ENCODE measurements at regions of chr14 and their contacts with region 1.

Region 1: DNA sequence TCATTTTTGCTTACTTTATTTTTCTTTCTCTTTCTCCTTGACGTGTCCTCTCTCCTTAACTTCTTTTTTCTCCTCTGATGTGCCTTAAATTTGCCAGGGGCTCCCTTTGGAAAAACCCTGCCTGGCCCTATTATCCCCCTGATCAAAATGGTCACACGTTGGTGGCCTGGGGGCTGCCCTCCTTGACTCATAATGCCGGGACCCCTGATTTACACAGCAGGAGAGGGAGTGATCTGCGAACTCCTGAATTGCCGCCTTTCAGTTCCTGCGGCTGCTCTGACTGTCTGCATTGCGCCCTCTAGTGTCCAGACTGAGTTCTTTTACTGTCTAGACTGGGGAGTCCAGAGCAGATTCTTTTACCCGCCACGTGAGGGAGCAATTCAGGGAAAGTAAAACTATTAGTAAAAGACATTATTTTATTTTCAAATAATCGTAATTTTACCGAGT is 44.8 kb upstream of the GZMB start:
- DNase-seq: peak; percentile 76
- H3K4me3 ChIP-seq: peak overlapping the region in 2 of 3 experiments; percentile 26 to 34
- H3K27ac ChIP-seq: peak overlapping the region; percentile 52
- H3K4me1 ChIP-seq: peaks cover 21% of the 10 kb centered on the region
- H3K27me3 ChIP-seq: no peaks in the 10 kb centered on the region
- CTCF ChIP-seq: peak; percentile 97 to 99

Region 2: DNA sequence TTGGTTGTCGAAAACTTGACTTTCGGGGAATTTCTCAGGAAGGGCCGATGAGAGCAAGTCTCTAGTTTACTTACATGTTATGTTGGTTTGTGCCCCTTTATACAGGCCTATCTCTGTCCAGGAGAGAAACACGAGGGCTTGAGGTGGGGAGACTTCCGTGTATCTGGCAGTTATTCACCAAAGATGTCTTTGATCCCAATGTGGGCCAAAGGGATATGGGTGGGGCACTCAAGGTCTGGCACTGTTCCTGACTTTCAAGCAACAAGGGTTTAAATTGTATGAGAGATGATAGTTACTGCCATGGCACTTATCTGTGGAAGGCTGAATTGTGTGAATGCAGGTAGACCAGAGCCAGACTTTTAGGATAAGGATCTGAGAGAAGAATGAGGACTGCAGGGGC is 862.5 kb before region 1 on chr14:
- CTCF ChIA-PET with region 1: no interaction called
- dilution Hi-C with region 1: no loop called
- in situ Hi-C with region 1: no loop called
- intact Hi-C with region 1: no loop called
- DNase-seq: no peak
- H3K4me3 ChIP-seq: no peak overlapping the region
- H3K27ac ChIP-seq: no peak overlapping the region
- H3K4me1 ChIP-seq: no peaks in the 10 kb centered on the region
- H3K27me3 ChIP-seq: no peaks in the 10 kb centered on the region
- CTCF ChIP-seq: no peak

Region 3: DNA sequence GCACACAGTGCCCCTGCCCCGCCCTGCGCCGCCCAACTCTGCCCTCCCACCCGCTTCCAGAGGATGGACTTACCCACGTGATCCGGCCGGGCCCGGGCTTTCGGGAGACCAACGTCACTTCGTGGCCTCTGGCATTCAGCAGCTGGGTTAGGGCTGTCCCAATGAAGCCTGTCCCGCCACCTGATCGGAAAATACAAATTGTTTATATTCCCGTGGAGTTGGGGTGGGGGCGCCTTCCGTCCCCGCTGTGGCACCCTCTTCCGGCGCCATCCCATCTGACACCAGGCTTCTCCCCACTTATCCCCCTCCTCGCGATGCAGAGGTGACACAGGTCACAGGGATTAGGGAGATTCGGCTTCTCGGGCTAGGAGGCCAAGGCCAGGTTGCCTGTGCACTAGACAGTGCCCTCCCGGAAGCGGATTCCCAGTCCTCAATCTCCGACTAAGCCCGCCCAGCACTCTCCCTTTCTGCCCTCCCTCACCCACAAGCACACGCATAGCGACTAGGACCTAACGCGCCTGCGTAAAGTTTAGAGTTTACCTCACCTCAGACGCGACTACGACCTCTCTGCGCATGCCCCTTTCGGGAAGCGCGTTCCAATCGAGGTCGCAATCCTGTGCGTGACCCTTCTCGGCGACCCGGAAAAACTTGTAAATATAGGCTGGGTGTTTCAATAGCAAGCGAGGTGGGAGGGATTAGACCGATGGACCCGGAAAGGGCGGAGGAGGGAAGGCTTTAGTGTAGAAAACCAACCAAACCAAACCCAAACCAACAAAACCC is 236.4 kb before region 1 on chr14 and contains the start of gene SDR39U1:
- CTCF ChIA-PET with region 1: no interaction called
- dilution Hi-C with region 1: no loop called
- in situ Hi-C with region 1: no loop called
- intact Hi-C with region 1: loop called (anchors 1 kb)
- DNase-seq: peak; percentile 98
- H3K4me3 ChIP-seq: peak within 1 kb of the TSS; percentile 60 to 91 (median 76)
- H3K27ac ChIP-seq: peak within 1 kb of the TSS; percentile 95
- H3K4me1 ChIP-seq: peaks cover 6% of the 10 kb centered on the region
- H3K27me3 ChIP-seq: no peaks in the 10 kb centered on the region
- CTCF ChIP-seq: peak in 1 of 2 donors; percentile 14
- total RNA-seq, gene SDR39U1: 8.8 to 39.1 TPM

Region 4: DNA sequence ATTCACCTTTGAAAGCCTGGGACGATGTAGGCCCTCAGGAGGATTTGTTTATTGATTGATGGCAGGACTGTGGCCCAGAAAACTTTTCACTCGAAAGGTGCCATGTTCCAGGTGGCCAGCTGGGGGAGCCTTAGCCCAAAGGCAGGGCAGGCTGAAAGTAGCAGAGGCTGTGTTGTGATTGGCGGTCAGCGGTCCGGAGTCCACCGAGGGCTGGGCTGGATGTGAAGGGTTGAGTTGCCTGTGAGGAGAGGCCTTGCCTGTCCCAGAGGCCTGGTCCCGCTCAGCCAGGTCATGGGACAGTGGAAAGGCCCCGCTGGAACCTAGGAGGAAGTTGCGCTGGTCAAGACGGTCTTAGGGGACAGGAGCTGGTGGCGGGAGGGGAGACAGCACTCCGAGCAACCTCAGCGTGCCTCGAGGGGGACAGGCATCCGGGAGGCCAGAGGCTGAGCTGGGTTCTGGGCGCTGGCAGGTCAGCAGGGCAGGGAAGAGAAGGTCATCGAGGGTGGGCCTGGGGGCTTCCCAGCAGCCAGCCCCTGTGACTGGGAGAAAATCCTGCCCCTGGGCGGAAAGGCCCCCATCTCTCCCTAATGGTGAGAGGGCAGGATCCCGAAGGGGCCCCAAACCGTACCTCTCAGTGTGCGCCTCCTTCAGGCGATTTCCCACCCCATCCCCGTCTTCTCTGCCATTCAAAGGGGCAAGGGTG is 197.1 kb before region 1 on chr14:
- CTCF ChIA-PET with region 1: no interaction called
- dilution Hi-C with region 1: no loop called
- in situ Hi-C with region 1: no loop called
- intact Hi-C with region 1: loop called (anchors 1 kb)
- DNase-seq: peak; percentile 33
- H3K4me3 ChIP-seq: no peak overlapping the region
- H3K27ac ChIP-seq: no peak overlapping the region
- H3K4me1 ChIP-seq: peaks cover 8% of the 10 kb centered on the region
- H3K27me3 ChIP-seq: no peaks in the 10 kb centered on the region
- CTCF ChIP-seq: peak; percentile 83

Region 5: DNA sequence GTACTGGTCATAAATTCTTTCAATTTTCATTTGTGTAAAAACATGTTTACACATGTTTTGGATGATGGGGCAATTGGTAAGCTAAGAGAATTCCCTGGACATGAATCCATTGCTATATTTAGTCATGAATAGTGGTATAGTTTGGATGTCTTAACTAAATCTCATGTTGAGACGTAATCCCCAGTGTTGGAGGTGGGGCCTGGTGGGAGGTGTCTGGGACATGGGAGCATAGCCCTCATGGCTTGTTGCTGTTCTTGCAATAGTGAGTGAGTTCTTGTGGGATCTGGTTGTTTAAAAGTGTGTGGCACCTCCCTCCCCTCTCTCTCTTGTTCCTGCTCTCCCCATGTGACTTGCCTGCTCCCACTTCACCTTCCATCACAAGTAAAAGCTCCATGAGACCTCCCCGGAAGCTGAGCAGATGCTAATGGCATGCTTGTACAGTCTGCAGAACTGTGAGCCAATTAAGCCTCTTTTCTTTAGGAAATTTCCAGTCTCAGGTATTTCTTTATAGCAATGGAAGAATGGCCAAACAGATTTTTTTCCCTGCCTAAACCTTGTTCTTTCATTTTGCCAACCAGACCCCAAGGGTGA is 136.4 kb before region 1 on chr14:
- CTCF ChIA-PET with region 1: no interaction called
- dilution Hi-C with region 1: no loop called
- in situ Hi-C with region 1: no loop called
- intact Hi-C with region 1: loop called (anchors 5 kb)
- DNase-seq: peak; percentile 93
- H3K4me3 ChIP-seq: no peak overlapping the region
- H3K27ac ChIP-seq: peak overlapping the region; percentile 92
- H3K4me1 ChIP-seq: peaks cover 13% of the 10 kb centered on the region
- H3K27me3 ChIP-seq: no peaks in the 10 kb centered on the region
- CTCF ChIP-seq: no peak

Region 6: GRCh38 chr14:24605435-24606190 is 73.2 kb before region 1 on chr14:
- CTCF ChIA-PET with region 1: no interaction called
- dilution Hi-C with region 1: no loop called
- in situ Hi-C with region 1: no loop called
- intact Hi-C with region 1: loop called (anchors 1 kb)
- DNase-seq: peak; percentile 25
- H3K4me3 ChIP-seq: no peak overlapping the region
- H3K27ac ChIP-seq: no peak overlapping the region
- H3K4me1 ChIP-seq: no peaks in the 10 kb centered on the region
- H3K27me3 ChIP-seq: no peaks in the 10 kb centered on the region
- CTCF ChIP-seq: peak; percentile 95 to 97

Region 7: GRCh38 chr14:24612196-24612595 is 66.6 kb before region 1 on chr14:
- CTCF ChIA-PET with region 1: no interaction called
- dilution Hi-C with region 1: no loop called
- in situ Hi-C with region 1: no loop called
- intact Hi-C with region 1: loop called (anchors 2 kb)
- DNase-seq: peak; percentile 87
- H3K4me3 ChIP-seq: no peak overlapping the region
- H3K27ac ChIP-seq: peak overlapping the region; percentile 89
- H3K4me1 ChIP-seq: peaks cover 30% of the 10 kb centered on the region
- H3K27me3 ChIP-seq: no peaks in the 10 kb centered on the region
- CTCF ChIP-seq: no peak

Region 8: DNA sequence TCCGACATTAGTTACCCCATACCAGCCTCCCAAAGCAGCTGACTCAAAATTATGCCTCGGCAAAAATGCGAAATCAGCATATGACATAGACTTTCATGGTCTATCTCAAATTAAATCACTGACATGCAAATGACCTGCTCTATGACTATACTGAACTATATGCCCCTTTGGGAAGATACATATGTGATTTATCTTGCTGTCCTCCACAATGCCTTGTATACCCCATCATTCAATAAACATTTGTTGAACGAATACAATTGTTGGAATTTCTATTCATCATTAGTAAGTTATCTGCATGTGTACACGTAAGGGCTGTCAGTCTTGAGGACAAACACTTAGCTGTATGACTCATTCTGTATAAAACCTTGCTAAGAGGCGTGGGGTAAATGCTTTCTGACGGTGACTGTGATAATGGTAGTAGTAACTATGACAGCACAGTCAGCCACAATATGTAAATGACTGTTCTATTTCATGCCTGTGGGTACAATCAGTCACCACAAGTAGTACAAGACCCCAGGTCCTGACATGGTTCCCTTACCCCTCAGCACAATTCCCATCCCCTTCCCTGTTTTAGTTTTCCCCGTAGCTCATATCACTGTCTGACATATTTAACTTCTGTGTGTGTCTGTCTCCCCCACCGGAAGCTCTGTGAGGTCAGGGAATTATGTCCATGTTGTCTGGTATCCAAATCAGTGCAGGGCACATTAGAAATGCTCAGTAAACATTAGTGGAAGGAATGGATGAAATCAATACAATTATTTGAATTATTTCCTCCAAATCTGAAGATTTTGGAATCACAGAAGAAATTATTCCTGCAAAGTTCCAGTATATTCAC is 328.4 kb after region 1 on chr14:
- CTCF ChIA-PET with region 1: no interaction called
- dilution Hi-C with region 1: no loop called
- in situ Hi-C with region 1: no loop called
- intact Hi-C with region 1: no loop called
- DNase-seq: peak; percentile 85
- H3K4me3 ChIP-seq: no peak overlapping the region
- H3K27ac ChIP-seq: no peak overlapping the region
- H3K4me1 ChIP-seq: no peaks in the 10 kb centered on the region
- H3K27me3 ChIP-seq: no peaks in the 10 kb centered on the region
- CTCF ChIP-seq: no peak

Measured in mammary epithelial cell (primary cell).